HEK293T (cell line): ENCODE measurements at regions of chr5 and their contacts with region 1.

Region 1: GRCh38 chr5:124824637-124825158 is 78.3 kb upstream of the ZNF608 start:
- DNase-seq: no peak

Region 2: GRCh38 chr5:124236361-124237205 is 588.1 kb before region 1 on chr5:
- CTCF ChIA-PET with region 1: interaction called, 12 read pairs
- POLR2A ChIA-PET with region 1: no interaction called
- DNase-seq: no peak

Region 3: GRCh38 chr5:124773315-124774311 is 51.1 kb before region 1 on chr5:
- CTCF ChIA-PET with region 1: no interaction called
- POLR2A ChIA-PET with region 1: no interaction called
- DNase-seq: no peak